Activated CD4-positive, alpha-beta T cell treated with anti-CD3 and anti-CD28 coated beads, Interleukin-2, amount 10 ng/mL, durations not matched to agents 7 days and 5 days (primary cell): ENCODE measurements at regions of chr14 and their contacts with region 1.

Region 1: GRCh38 chr14:22641846-22642245 is 2.3 kb downstream of the OR6J1 start:
- DNase-seq: no peak
- H3K4me3 Mint-ChIP-seq: no peak overlapping the region
- H3K27ac Mint-ChIP-seq: no peak overlapping the region
- H3K4me1 Mint-ChIP-seq: peaks cover 2% of the 10 kb centered on the region
- H3K27me3 Mint-ChIP-seq: no peaks in the 10 kb centered on the region

Region 2: DNA sequence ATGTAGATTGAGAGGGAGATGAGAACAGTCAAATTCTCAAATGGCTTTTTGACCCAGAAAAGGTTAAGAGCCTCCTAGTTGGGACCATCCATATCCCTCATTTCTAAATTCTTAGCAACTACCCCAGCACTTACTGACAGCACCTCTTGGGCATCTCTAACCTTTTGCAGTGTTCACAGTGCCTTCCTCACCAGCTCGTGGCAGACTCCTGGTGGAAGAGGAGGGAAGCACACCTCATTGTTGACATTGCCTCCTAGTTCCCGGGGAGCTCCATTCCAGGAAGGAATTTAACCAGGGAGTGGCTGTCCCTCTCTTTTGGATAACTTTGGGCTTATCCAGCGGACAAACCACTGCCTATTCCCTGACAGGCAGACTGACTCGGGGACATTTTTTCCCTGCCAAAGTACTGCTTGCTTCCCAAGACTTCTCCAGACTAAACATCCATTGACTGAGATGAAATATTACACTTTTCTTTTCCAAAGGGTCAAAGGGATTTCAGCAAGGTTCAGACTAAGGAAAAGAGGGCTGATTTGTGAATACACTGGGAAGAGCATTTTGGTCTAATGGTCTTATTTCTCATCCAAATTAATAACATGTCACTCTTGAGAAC is 11.3 kb after region 1 on chr14:
- CTCF ChIA-PET with region 1: interaction called, 10 read pairs
- POLR2A ChIA-PET with region 1: no interaction called
- DNase-seq: peak; percentile 64
- H3K4me3 Mint-ChIP-seq: no peak overlapping the region
- H3K27ac Mint-ChIP-seq: no peak overlapping the region
- H3K4me1 Mint-ChIP-seq: peaks cover 9% of the 10 kb centered on the region
- H3K27me3 Mint-ChIP-seq: no peaks in the 10 kb centered on the region